Activated CD4-positive, alpha-beta memory T cell treated with anti-CD3 and anti-CD28 coated beads for 36 hours (primary cell): ENCODE measurements at regions of chr15 and their contacts with region 1.

Region 1: GRCh38 chr15:45279024-45279698 is 27.1 kb downstream of the SLC28A2 start:
- DNase-seq: peak; percentile 98
- H3K4me3 Mint-ChIP-seq: peak overlapping the region; percentile 85
- H3K27ac Mint-ChIP-seq: peak overlapping the region; percentile 57
- H3K4me1 Mint-ChIP-seq: peaks cover 10% of the 10 kb centered on the region
- H3K27me3 Mint-ChIP-seq: no peaks in the 10 kb centered on the region

Region 2: GRCh38 chr15:45205192-45205591 is 74.0 kb before region 1 on chr15:
- CTCF ChIA-PET with region 1: interaction called, 10 read pairs
- POLR2A ChIA-PET with region 1: interaction called, 7 read pairs
- intact Hi-C with region 1: loop called (anchors 1 kb)
- DNase-seq: peak; percentile 81
- H3K4me3 Mint-ChIP-seq: no peak overlapping the region
- H3K27ac Mint-ChIP-seq: no peak overlapping the region
- H3K4me1 Mint-ChIP-seq: peaks cover 4% of the 10 kb centered on the region
- H3K27me3 Mint-ChIP-seq: peaks cover 7% of the 10 kb centered on the region

Region 3: GRCh38 chr15:45372041-45372995 is 93.2 kb after region 1 on chr15:
- CTCF ChIA-PET with region 1: no interaction called
- POLR2A ChIA-PET with region 1: no interaction called
- intact Hi-C with region 1: no loop called
- DNase-seq: no peak
- H3K4me3 Mint-ChIP-seq: no peak overlapping the region
- H3K27ac Mint-ChIP-seq: no peak overlapping the region
- H3K4me1 Mint-ChIP-seq: peaks cover 7% of the 10 kb centered on the region
- H3K27me3 Mint-ChIP-seq: peaks cover 42% of the 10 kb centered on the region

Region 4: GRCh38 chr15:45414215-45414885 is 135.2 kb after region 1 on chr15:
- CTCF ChIA-PET with region 1: no interaction called
- POLR2A ChIA-PET with region 1: no interaction called
- intact Hi-C with region 1: no loop called
- DNase-seq: no peak
- H3K4me3 Mint-ChIP-seq: no peak overlapping the region
- H3K27ac Mint-ChIP-seq: no peak overlapping the region
- H3K4me1 Mint-ChIP-seq: peaks cover 18% of the 10 kb centered on the region
- H3K27me3 Mint-ChIP-seq: no peaks in the 10 kb centered on the region